Heart left ventricle (tissue), 16 donors: ENCODE measurements at regions of chr4 and their contacts with region 1.

Region 1: DNA sequence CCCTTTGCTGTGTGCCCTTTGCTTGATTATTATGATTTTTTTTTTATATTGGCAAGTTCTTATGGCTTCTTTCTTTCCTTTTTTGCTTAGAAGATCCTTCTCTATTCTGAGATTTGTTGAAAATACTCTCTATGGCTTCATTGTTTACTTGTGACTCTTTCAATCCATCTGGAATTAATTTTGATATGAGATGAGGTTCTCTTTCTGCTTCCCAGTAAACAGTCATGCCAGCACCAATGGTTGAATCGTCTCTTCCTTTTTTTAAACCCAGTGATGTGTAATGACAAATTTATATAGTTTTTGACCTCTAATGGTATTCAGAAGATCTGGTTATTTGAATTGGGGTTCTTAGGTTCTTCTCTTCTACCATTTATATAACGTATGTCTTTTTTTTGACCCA is 121.8 kb downstream of the ARHGAP10 start:
- DNase-seq: no peak
- ATAC-seq: peak in 2 of 4 donors; percentile 34 to 41
- H3K4me3 ChIP-seq: no peak overlapping the region
- H3K27ac ChIP-seq: peak overlapping the region in 11 of 12 donors; percentile 5 to 82 (median 42)
- H3K4me1 ChIP-seq: peaks cover 0 to 60% (median 32%) of the 10 kb centered on the region in 12 donors
- H3K27me3 ChIP-seq: no peaks in the 10 kb centered on the region
- CTCF ChIP-seq: no peak
- POLR2A ChIP-seq: no peak

Region 2: DNA sequence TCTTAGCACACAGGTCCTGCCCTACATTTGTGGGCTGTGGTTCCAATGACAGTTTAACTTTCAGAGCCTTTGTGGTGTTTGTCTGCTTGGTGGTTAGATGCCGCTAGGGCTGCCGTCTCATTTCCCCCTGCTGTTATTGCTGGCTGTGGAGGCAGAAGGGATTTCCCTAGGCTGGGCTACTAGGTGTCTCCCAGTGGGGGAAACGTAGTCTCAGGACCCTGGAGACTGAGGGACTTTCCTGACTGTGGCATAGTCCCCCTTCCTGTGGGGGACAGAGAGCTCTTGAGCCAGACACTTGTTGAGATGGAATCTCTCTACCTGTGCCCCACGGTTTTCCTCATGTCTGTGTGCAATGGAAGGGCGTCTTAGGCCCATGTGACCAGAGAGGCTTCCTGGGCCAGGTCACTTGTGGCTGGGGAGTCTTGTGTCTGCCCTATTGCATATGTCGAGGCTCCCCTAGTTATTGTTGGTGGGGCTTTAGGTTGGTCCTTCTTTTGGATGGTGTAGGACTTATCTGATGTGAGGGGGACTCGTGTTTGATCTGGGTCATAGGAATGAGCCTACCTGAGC is 53.6 kb before region 1 on chr4:
- intact Hi-C with region 1: loop called in 1 of 10 experiments (anchors 10 kb)
- DNase-seq: no peak
- ATAC-seq: peak in 3 of 4 donors; percentile 22 to 41 (median 39)
- H3K4me3 ChIP-seq: no peak overlapping the region
- H3K27ac ChIP-seq: peak overlapping the region in 9 of 12 donors; percentile 0 to 62 (median 45)
- H3K4me1 ChIP-seq: peaks cover 0 to 55% (median 40%) of the 10 kb centered on the region in 12 donors
- H3K27me3 ChIP-seq: no peaks in the 10 kb centered on the region
- CTCF ChIP-seq: no peak
- POLR2A ChIP-seq: no peak

Region 3: DNA sequence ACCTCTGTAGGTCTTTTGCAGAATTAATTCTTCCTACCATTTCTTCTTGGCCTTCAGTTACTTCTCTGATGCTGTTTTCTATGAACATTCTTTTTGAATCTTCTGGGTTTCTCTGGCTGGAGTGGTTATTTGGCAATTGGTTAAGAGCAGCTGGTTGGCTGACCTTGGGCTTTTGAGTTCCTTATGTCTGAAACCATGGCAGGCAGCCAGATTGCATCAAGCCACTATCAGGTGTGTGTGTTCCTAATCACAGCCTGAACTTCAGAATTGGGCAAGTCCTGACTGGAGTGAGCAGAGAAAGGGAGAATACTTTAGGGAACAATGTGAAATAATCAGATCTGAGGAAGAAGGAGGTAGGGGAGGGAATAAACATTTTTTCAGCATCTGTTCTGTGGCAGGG is 31.6 kb before region 1 on chr4:
- intact Hi-C with region 1: loop called in 1 of 10 experiments (anchors 5 kb)
- DNase-seq: peak; percentile 67 to 93 (median 85)
- ATAC-seq: peak; percentile 71 to 83 (median 77)
- H3K4me3 ChIP-seq: no peak overlapping the region
- H3K27ac ChIP-seq: peak overlapping the region; percentile 28 to 91 (median 80)
- H3K4me1 ChIP-seq: peaks cover 11 to 73% (median 53%) of the 10 kb centered on the region in 12 donors
- H3K27me3 ChIP-seq: no peaks in the 10 kb centered on the region
- CTCF ChIP-seq: no peak
- POLR2A ChIP-seq: no peak

Region 4: GRCh38 chr4:147924604-147925412 is 71.1 kb after region 1 on chr4:
- intact Hi-C with region 1: no loop called
- DNase-seq: peak in 1 of 5 donors; percentile 20
- ATAC-seq: no peak
- H3K4me3 ChIP-seq: no peak overlapping the region
- H3K27ac ChIP-seq: no peak overlapping the region
- H3K4me1 ChIP-seq: peaks cover 0 to 25% (median 4%) of the 10 kb centered on the region in 12 donors
- H3K27me3 ChIP-seq: no peaks in the 10 kb centered on the region
- CTCF ChIP-seq: peak in 10 of 12 donors; percentile 23 to 57 (median 43)
- POLR2A ChIP-seq: no peak